Activated CD8-positive, alpha-beta T cell treated with anti-CD3 and anti-CD28 coated beads, Interleukin-2, amount 10 ng/mL, durations not matched to agents 7 days and 5 days (primary cell): ENCODE measurements at regions of chr6 and their contacts with region 1.

Region 1: GRCh38 chr6:160534050-160534696 is 129.9 kb downstream of the LPA start:
- DNase-seq: peak; percentile 68
- ATAC-seq: peak; percentile 86
- H3K4me3 Mint-ChIP-seq: no peak overlapping the region
- H3K27ac Mint-ChIP-seq: no peak overlapping the region
- H3K4me1 Mint-ChIP-seq: no peaks in the 10 kb centered on the region
- H3K27me3 Mint-ChIP-seq: peaks cover 26% of the 10 kb centered on the region

Region 2: GRCh38 chr6:160137989-160138835 is 396.0 kb before region 1 on chr6:
- CTCF ChIA-PET with region 1: interaction called, 19 read pairs
- POLR2A ChIA-PET with region 1: no interaction called
- DNase-seq: peak; percentile 79
- ATAC-seq: peak; percentile 58
- H3K4me3 Mint-ChIP-seq: no peak overlapping the region
- H3K27ac Mint-ChIP-seq: no peak overlapping the region
- H3K4me1 Mint-ChIP-seq: peaks cover 5% of the 10 kb centered on the region
- H3K27me3 Mint-ChIP-seq: peaks cover 2% of the 10 kb centered on the region

Region 3: GRCh38 chr6:160238278-160238711 is 295.9 kb before region 1 on chr6:
- CTCF ChIA-PET with region 1: no interaction called
- POLR2A ChIA-PET with region 1: no interaction called
- DNase-seq: no peak
- ATAC-seq: no peak
- H3K4me3 Mint-ChIP-seq: no peak overlapping the region
- H3K27ac Mint-ChIP-seq: no peak overlapping the region
- H3K4me1 Mint-ChIP-seq: no peaks in the 10 kb centered on the region
- H3K27me3 Mint-ChIP-seq: peaks cover 2% of the 10 kb centered on the region

Region 4: GRCh38 chr6:160398674-160399271 is 135.4 kb before region 1 on chr6:
- CTCF ChIA-PET with region 1: no interaction called
- POLR2A ChIA-PET with region 1: no interaction called
- DNase-seq: no peak
- ATAC-seq: no peak
- H3K4me3 Mint-ChIP-seq: no peak overlapping the region
- H3K27ac Mint-ChIP-seq: peak overlapping the region; percentile 31
- H3K4me1 Mint-ChIP-seq: peaks cover 19% of the 10 kb centered on the region
- H3K27me3 Mint-ChIP-seq: peaks cover 14% of the 10 kb centered on the region

Region 5: GRCh38 chr6:160421854-160422253 is 112.3 kb before region 1 on chr6:
- CTCF ChIA-PET with region 1: no interaction called
- POLR2A ChIA-PET with region 1: no interaction called
- DNase-seq: no peak
- ATAC-seq: no peak
- H3K4me3 Mint-ChIP-seq: no peak overlapping the region
- H3K27ac Mint-ChIP-seq: no peak overlapping the region
- H3K4me1 Mint-ChIP-seq: peaks cover 8% of the 10 kb centered on the region
- H3K27me3 Mint-ChIP-seq: peaks cover 21% of the 10 kb centered on the region

Region 6: DNA sequence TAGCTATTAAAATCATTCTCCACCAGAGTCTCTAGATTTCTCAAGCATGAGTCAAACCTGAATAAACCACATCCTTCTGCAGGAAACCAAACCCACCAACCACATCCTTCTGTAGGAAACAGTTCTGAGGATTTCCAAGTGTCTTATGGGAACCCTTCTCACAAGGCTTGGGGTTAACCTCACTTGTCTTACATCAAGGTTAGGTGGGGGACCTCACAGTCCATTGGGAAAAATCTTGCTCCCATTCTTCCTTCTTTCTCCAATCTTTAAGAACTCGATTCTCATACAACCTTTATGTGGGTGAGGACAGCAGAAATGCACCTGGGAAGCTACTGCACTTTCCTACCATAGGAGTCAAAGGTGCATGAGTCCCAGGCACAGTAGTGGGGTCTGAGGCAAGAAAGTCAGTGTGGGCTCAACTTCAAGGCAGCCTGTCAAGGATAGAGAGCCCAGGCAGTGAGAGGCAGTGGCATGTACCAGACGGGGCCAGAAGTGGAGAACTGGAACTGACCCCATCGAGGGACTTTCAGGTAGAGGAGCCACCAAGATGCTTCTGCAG is 71.5 kb before region 1 on chr6:
- CTCF ChIA-PET with region 1: interaction called, 11 read pairs
- POLR2A ChIA-PET with region 1: no interaction called
- DNase-seq: peak; percentile 90
- ATAC-seq: peak; percentile 85
- H3K4me3 Mint-ChIP-seq: peak overlapping the region; percentile 25
- H3K27ac Mint-ChIP-seq: peak overlapping the region; percentile 73
- H3K4me1 Mint-ChIP-seq: peaks cover 68% of the 10 kb centered on the region
- H3K27me3 Mint-ChIP-seq: peaks cover 34% of the 10 kb centered on the region

Region 7: DNA sequence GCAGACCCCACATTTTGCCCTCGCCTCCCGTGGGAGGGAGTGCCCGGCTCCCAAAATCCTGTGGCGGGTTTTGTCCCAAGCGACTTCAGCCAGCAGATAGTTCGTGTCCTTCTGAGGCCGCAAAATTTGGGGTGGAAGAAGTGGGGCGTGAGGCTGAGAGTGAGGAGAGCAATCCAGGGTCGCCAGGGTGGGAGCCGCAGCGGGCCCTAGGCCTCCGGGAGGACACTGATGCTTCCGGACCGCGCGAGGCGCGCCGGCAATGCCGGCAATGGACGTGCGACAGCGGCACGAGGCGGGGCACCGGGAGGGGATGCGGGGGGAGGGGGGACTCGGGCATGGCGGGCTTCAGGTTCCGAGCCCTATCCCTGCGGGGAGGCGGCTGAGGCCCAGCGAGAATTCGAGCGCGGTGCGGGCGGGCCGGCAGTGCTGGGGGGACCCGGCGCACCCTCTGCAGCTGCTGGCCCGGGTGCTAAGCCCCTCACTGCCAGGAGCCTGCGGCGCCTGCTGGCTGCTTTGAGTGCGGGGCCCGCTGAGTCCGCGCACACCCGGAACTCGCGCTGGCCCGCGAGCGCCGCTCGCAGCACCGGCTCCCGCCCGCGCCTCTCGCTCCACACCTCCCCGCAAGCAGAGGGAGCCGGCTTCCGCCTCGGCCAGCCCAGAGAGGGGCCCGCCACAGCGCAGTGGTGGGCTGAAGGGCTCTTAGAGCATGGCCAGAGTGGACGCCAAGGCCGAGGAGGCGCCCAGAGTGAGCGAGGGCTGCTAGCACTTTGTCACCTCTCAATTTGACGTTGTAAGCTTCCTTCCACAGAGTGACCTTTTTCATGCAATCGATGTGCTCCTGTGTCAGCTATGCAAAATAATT is 13.9 kb before region 1 on chr6:
- CTCF ChIA-PET with region 1: interaction called, 73 read pairs
- POLR2A ChIA-PET with region 1: no interaction called
- DNase-seq: peak; percentile 81
- ATAC-seq: peak; percentile 90
- H3K4me3 Mint-ChIP-seq: peak overlapping the region; percentile 94
- H3K27ac Mint-ChIP-seq: peak overlapping the region; percentile 95
- H3K4me1 Mint-ChIP-seq: peaks cover 25% of the 10 kb centered on the region
- H3K27me3 Mint-ChIP-seq: peaks cover 32% of the 10 kb centered on the region

Region 8: GRCh38 chr6:160926868-160927291 is 392.7 kb after region 1 on chr6:
- CTCF ChIA-PET with region 1: no interaction called
- POLR2A ChIA-PET with region 1: no interaction called
- DNase-seq: no peak
- ATAC-seq: no peak
- H3K4me3 Mint-ChIP-seq: no peak overlapping the region
- H3K27ac Mint-ChIP-seq: no peak overlapping the region
- H3K4me1 Mint-ChIP-seq: no peaks in the 10 kb centered on the region
- H3K27me3 Mint-ChIP-seq: peaks cover 20% of the 10 kb centered on the region